H1 (cell line): ENCODE measurements at regions of chr4 and their contacts with region 1.

Region 1: DNA sequence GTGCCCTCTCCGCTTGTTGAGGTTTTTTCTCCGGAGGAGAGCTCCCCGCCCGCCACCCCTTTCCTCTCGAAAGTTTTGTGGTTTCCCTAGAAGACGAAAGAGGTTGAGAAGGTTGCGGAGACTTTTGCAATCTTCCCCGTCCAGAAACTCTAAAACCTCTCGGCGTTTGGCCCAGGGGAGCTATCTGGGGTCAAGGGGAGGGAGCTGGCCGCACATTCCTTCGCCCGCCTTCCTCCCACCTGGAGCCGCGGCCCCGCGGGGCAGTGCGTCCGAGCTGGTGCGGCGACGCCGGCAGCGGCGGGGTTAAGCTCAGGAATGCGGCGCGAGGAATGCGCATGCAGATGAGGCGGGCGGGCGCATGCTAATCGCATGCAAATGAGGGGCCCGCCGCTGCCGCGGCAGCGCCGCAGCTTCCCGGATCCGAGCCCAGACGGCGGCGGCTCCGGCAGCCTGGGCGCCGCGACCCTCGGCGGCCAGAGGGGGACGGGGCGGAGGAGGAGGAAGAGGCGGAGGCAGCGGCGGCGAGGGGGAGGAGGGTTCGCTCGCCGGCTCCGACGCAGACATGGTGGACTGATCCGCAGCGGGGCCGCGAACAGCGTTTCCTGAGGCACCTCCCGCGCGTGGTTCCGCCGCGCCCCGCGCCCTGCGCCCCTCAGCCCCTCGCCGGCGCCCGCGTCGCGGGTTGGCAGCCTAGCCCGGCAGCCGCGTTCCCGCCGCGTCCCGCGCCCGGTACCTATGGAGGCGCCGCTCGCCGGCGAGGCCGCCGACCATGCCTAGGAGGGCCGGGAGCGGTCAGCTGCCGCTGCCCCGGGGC is at the start of gene WWC2:
- DNase-seq: peak; percentile 92
- H3K4me3 ChIP-seq: peak within 1 kb of the TSS; percentile 71 to 98 (median 80)
- H3K27ac ChIP-seq: peak within 1 kb of the TSS; percentile 90
- H3K4me1 ChIP-seq: peaks cover 0 to 17% (median 12%) of the 10 kb centered on the region in 4 experiments; a peak in 6 of 7 replicates
- H3K27me3 ChIP-seq: no peaks in the 10 kb centered on the region; a peak in 1 of 7 replicates
- CTCF ChIP-seq: no peak
- EP300 ChIP-seq: peak in 1 of 2 experiments; percentile 82; a peak in 1 of 3 replicates
- POLR2A ChIP-seq: peak; percentile 90 to 93
- RAD21 ChIP-seq: peak; percentile 0 to 20; a peak in 3 of 4 replicates
- total RNA-seq, gene WWC2: 135 and 138 TPM in 2 replicates

Region 2: DNA sequence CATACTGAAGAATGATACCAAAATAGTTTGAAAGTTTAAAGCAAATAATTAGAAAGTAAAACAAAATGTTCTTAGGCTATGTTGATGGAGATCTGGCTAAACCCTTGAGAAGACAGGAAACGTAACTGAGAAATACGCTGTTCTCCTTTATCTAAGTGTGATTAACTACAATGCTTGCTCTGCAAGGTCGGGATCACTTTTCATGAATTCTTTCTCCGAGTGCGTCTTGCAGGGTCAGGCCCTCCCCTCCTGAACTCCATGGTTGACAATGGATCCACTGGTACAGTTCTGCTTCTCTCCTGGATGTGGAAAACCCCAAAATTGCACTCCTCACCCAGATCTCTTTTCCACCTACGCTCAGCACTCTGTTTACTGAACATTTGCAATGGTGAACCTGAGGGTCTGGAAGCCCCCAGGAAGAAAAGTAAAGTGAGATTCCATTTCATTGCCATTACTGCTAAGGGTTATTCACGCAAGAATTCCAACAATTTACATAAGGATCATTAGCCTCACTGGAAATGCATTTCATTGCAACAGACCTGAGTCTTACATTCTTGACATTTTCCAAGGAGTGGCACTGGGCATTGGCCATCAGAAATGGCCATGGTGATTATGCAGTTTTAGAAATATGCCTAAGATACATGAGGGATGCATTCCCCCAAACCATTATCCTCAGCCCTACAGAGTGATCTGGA is 24.5 kb before region 1 on chr4:
- CTCF ChIA-PET with region 1: interaction called, 32 read pairs
- POLR2A ChIA-PET with region 1: interaction called, 41 read pairs
- DNase-seq: no peak
- H3K4me3 ChIP-seq: peak overlapping the region in 1 of 4 experiments; percentile 7; a peak in 1 of 8 replicates
- H3K27ac ChIP-seq: no peak overlapping the region
- H3K4me1 ChIP-seq: peaks cover 3 to 14% (median 7%) of the 10 kb centered on the region in 4 experiments; a peak in 5 of 7 replicates
- H3K27me3 ChIP-seq: no peaks in the 10 kb centered on the region
- CTCF ChIP-seq: no peak
- EP300 ChIP-seq: no peak
- POLR2A ChIP-seq: no peak
- RAD21 ChIP-seq: no peak

Region 3: GRCh38 chr4:183118585-183118984 is 19.7 kb after region 1 on chr4:
- CTCF ChIA-PET with region 1: interaction called, 4 read pairs
- POLR2A ChIA-PET with region 1: interaction called, 103 read pairs
- DNase-seq: no peak
- H3K4me3 ChIP-seq: peak overlapping the region in 2 of 4 experiments; percentile 3 to 39; a peak in 4 of 8 replicates
- H3K27ac ChIP-seq: peak overlapping the region; percentile 59
- H3K4me1 ChIP-seq: peaks cover 2 to 21% (median 16%) of the 10 kb centered on the region in 4 experiments; a peak in 5 of 7 replicates
- H3K27me3 ChIP-seq: no peaks in the 10 kb centered on the region
- CTCF ChIP-seq: no peak
- EP300 ChIP-seq: no peak
- POLR2A ChIP-seq: peak in 1 of 2 experiments; percentile 46; a peak in 1 of 3 replicates
- RAD21 ChIP-seq: no peak

Region 4: DNA sequence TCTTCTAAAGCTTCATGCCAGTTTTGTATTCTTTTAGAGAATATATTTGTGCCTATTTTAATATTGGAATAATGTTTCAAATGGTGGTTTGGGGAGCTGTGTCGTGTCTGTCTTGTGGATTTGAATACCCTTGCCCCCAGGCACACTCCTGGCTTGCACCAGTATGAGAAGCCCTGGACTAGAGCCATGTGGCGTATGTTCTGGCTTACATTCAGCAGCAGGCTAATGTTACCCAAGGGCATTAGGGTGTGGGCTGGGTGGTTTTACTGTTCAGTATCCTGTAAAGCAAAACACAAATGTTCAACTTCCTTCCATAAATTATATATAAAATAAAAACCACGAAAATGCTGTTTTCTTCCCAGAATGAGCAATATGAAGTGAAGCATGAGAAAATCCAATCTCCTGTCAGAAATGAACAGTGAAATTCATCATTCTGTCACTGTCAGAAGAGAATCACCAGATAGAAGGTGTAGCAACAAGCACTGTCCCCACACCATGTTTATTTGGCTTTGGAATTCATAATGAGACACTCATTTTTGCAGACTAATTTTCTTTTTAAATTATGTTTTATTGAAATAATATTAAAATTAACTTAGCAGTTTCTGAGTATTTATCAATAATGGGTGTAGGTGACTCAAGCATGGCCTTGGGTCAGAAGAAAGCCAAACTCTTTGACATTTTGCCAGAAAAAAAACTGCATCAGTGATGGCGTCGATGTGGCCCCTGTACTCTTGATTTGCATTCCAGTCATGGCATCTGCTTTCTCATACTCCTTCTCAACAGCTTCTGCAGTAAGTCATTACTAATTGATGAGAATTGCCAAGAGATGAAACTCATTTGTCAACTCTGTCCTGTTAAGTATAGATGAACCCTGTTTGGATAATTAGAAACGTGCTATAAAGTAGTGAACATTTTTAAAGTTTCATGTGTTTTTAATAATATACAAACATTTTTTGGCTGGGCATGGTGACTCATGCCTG is 43.9 kb after region 1 on chr4:
- CTCF ChIA-PET with region 1: interaction called, 5 read pairs
- POLR2A ChIA-PET with region 1: interaction called, 11 read pairs
- DNase-seq: no peak
- H3K4me3 ChIP-seq: no peak overlapping the region
- H3K27ac ChIP-seq: no peak overlapping the region
- H3K4me1 ChIP-seq: peaks cover 0 to 11% (median 3%) of the 10 kb centered on the region in 4 experiments; a peak in 5 of 7 replicates
- H3K27me3 ChIP-seq: no peaks in the 10 kb centered on the region
- CTCF ChIP-seq: no peak
- EP300 ChIP-seq: no peak
- POLR2A ChIP-seq: no peak
- RAD21 ChIP-seq: no peak

Region 5: DNA sequence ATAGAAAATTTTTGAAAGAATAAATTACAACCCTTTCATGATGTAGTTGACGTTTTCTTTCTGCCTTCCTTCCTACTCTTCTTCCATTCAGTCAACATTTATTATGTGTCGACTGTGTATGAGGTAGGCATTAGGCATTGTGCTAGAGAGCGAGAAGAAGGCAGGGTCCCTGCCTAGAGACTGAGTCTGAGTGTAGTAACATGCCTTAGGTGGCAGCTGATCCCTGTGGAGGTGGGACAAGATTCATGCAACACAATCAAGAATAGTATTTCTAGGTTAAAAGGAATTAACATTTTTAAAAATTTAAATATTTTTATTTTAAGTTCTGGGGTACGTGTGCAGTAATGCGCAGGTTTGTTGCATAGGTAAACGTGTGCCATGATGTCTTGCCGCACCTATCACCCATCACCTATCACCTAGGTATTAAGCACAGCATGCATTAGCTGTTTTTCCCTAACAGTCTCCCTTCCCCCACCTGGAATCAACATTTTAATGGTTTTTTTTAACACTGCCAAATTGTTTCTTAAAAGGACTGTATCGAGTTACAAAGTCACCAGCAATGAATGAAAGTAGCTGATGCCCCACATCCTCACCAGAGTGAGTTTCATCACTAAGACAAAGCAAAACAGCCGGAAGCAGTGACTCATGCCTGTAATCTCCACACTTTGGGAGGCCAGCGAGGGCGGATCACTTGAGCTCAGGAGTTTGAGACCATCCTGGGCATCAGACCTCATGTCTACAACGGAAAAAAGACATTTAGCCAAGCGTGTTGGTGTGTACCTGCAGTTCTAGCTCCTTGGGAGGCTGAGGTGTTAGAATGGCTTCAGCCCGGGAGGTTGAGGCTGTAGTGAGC is 84.2 kb after region 1 on chr4:
- CTCF ChIA-PET with region 1: interaction called, 5 read pairs
- POLR2A ChIA-PET with region 1: interaction called, 38 read pairs
- DNase-seq: peak; percentile 70 to 89
- H3K4me3 ChIP-seq: peak overlapping the region; percentile 5 to 52 (median 18); a peak in 5 of 8 replicates
- H3K27ac ChIP-seq: peak overlapping the region; percentile 90
- H3K4me1 ChIP-seq: peaks cover 5 to 43% (median 20%) of the 10 kb centered on the region in 4 experiments
- H3K27me3 ChIP-seq: no peaks in the 10 kb centered on the region
- CTCF ChIP-seq: no peak
- EP300 ChIP-seq: peak in 1 of 2 experiments; percentile 93; a peak in 1 of 3 replicates
- POLR2A ChIP-seq: peak in 1 of 2 experiments; percentile 80; a peak in 2 of 3 replicates
- RAD21 ChIP-seq: no peak

Region 6: GRCh38 chr4:183241322-183241640 is 142.4 kb after region 1 on chr4:
- CTCF ChIA-PET with region 1: interaction called, 6 read pairs
- POLR2A ChIA-PET with region 1: interaction called, 40 read pairs
- DNase-seq: no peak
- H3K4me3 ChIP-seq: no peak overlapping the region
- H3K27ac ChIP-seq: no peak overlapping the region
- H3K4me1 ChIP-seq: peaks cover 6 to 17% (median 15%) of the 10 kb centered on the region in 4 experiments
- H3K27me3 ChIP-seq: no peaks in the 10 kb centered on the region
- CTCF ChIP-seq: no peak
- EP300 ChIP-seq: no peak
- POLR2A ChIP-seq: no peak
- RAD21 ChIP-seq: no peak

Region 7: GRCh38 chr4:183256756-183257385 is 157.9 kb after region 1 on chr4:
- CTCF ChIA-PET with region 1: interaction called, 24 read pairs
- POLR2A ChIA-PET with region 1: interaction called, 17 read pairs
- DNase-seq: peak in 1 of 2 experiments; percentile 73
- H3K4me3 ChIP-seq: no peak overlapping the region
- H3K27ac ChIP-seq: no peak overlapping the region
- H3K4me1 ChIP-seq: peaks cover 0 to 4% (median 0%) of the 10 kb centered on the region in 4 experiments; a peak in 1 of 7 replicates
- H3K27me3 ChIP-seq: no peaks in the 10 kb centered on the region
- CTCF ChIP-seq: peak; percentile 84 to 89 (median 88)
- EP300 ChIP-seq: no peak
- POLR2A ChIP-seq: no peak
- RAD21 ChIP-seq: peak; percentile 77 to 78